ENCODE measurements at regions of chr5 and their contacts with region 1.

Region 1: DNA sequence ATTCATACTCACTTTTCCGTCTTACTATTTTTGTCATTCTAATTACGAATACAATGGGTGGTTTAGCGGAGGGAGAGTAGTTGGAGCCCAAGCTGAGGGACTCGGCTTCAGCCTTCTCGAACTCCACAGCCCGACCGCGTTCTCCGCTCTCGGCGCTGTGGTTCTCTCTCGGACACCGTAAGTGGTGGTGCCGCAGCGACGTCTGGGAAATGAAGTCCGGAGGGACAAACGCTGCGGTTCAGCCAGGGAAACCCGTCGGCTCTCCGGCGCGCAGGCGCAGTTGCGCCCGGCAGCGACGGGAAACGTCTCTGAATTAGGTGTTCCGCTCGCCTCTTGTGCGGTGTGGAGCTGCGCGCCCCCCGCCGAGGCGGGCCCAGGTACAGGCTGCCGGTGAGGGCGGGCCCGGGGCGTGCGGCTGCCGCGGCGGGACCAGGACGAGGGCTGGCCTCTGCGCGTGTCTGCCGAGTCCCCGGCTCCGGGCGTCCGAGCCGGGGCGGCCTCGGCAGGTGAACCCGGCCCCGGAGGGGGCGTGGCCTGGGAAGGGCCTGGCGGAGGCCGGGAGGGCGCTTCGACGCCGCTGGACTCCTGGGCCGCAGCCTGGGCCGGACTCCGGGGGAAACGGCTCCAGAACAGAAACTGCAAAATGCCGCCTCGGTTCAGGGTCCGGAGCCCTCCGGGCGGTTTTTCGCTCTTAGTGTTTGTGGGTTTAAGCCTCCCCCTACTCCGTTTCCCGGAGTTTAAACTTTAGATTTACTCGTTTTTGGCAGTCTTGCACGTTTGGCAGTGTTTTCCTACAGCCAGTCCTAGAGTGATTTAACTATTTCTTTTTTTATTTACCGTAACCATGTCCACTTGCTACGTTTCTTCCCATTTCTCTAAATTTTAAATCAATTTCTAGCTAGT is at the start of gene ZNF879:
- DNase-seq: peak; percentile 94
- H3K4me3 ChIP-seq: peak within 1 kb of the TSS; percentile 76 to 89
- H3K27ac ChIP-seq: peak within 1 kb of the TSS; percentile 79 to 84
- H3K4me1 ChIP-seq: no peaks in the 10 kb centered on the region
- H3K27me3 ChIP-seq: no peaks in the 10 kb centered on the region
- CTCF ChIP-seq: peak in 2 of 4 experiments; percentile 12 to 20
- POLR2A ChIP-seq: peak; percentile 39
- total RNA-seq, gene ZNF879: 6.6 to 18.1 TPM

Region 2: GRCh38 chr5:178551059-178551458 is 472.7 kb before region 1 on chr5:
- intact Hi-C with region 1: no loop called
- DNase-seq: no peak
- H3K4me3 ChIP-seq: no peak overlapping the region
- H3K27ac ChIP-seq: no peak overlapping the region
- H3K4me1 ChIP-seq: no peaks in the 10 kb centered on the region
- H3K27me3 ChIP-seq: no peaks in the 10 kb centered on the region
- CTCF ChIP-seq: peak; percentile 19 to 61 (median 50)
- POLR2A ChIP-seq: no peak

Region 3: GRCh38 chr5:178690208-178690607 is 333.6 kb before region 1 on chr5:
- intact Hi-C with region 1: no loop called
- DNase-seq: no peak
- H3K4me3 ChIP-seq: no peak overlapping the region
- H3K27ac ChIP-seq: no peak overlapping the region
- H3K4me1 ChIP-seq: no peaks in the 10 kb centered on the region
- H3K27me3 ChIP-seq: no peaks in the 10 kb centered on the region
- CTCF ChIP-seq: no peak
- POLR2A ChIP-seq: no peak

Region 4: DNA sequence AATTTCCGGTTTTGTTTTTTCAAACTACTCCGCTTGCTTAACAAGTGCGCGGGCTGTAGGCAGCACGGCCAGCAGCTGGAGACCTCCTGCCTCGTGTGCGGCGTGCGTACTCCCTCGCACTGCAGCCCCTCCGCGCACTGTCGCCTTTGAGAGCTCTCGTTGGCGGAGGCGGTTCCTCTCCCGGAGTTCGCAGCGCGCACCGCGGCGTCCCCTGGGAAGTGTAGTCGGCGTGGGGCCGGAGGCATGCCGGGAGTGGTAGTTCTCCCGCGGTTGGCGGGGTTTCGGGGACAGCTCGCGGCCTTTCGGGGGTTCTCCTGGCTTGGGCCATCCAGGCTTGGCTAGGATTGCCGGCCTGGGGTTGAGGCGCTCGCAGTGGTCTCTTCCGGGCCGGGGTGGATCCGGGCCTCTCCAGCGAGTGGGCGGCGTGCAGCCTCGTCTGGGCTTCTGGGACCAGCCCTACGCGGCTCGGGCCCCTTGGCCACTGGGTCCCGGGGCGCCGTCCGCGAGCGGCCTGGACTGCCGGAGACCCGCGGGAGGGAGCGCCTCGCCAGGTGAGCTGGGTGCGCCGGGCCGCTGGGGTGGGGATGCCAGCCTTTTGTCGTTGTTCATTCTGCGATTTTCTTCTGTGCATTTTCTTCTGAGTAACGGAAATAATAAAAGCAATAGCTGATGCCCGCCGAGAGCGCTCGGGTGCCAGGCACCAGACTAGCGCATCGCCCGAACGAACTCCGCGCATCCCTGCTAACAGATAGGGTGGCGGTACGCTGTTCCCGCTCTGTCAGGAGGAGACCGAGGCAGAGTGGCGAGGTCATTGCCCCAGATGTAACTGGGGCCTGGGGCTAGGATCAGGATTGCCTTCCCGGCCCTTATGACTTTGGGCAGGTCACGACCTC is 36.6 kb after region 1 on chr5 and contains the start of gene ZNF354C:
- intact Hi-C with region 1: loop called (anchors 5 kb)
- DNase-seq: peak; percentile 79
- H3K4me3 ChIP-seq: peak within 1 kb of the TSS; percentile 83 to 89
- H3K27ac ChIP-seq: peak within 1 kb of the TSS; percentile 80 to 83
- H3K4me1 ChIP-seq: no peaks in the 10 kb centered on the region
- H3K27me3 ChIP-seq: no peaks in the 10 kb centered on the region
- CTCF ChIP-seq: no peak
- POLR2A ChIP-seq: no peak
- total RNA-seq, gene ZNF354C: 5.7 to 6.5 TPM